ENCODE measurements at regions of chr11 and their contacts with region 1.

Region 1: GRCh38 chr11:112280268-112281126 is 19.8 kb upstream of the PLET1 start:
- DNase-seq: peak; percentile 22 to 88 (median 58)
- ATAC-seq: peak; percentile 87 to 95 (median 90)
- H3K4me3 ChIP-seq: peak overlapping the region; percentile 67 to 75
- H3K4me3 Mint-ChIP-seq: peak overlapping the region; percentile 86 to 89 (median 88)
- H3K27ac ChIP-seq: peak overlapping the region; percentile 26
- H3K27ac Mint-ChIP-seq: peak overlapping the region; percentile 73 to 83
- H3K4me1 ChIP-seq: peaks cover 3 to 17% of the 10 kb centered on the region in 2 experiments
- H3K4me1 Mint-ChIP-seq: peaks cover 15 to 21% (median 16%) of the 10 kb centered on the region in 3 donors
- H3K27me3 ChIP-seq: peaks cover 0 to 3% of the 10 kb centered on the region in 2 experiments
- H3K27me3 Mint-ChIP-seq: no peaks in the 10 kb centered on the region

Region 2: DNA sequence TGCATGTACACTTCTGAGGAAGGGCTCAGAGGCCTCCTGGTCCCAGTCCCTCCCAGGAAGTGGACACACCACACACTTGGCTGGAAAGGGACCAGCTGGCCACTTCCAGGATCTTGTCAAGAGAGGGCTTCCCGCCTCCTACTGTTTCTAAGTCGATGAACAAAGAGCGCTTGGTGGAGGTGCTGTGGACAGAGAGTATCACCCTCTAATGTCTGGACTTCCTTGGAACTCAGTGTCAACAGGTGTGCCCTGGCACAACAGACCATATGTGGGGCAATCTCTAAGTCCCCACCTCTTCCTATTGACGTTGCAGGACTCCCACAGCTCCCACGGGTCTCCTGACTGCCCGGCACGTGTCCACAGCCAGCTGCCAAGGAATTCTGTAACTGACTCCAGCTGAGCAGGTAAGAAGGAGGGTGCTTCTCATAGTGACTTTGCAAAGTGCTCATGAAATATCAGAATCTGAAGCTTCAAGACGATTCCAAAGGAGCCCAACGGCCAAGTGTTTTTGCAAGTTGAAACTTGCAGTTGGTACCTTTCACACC is 917.5 kb before region 1 on chr11:
- CTCF ChIA-PET with region 1: interaction called in 1 of 2 experiments, 10 read pairs
- POLR2A ChIA-PET with region 1: no interaction called
- DNase-seq: no peak
- ATAC-seq: no peak
- H3K4me3 ChIP-seq: no peak overlapping the region
- H3K4me3 Mint-ChIP-seq: no peak overlapping the region
- H3K27ac ChIP-seq: no peak overlapping the region
- H3K27ac Mint-ChIP-seq: no peak overlapping the region
- H3K4me1 ChIP-seq: no peaks in the 10 kb centered on the region
- H3K4me1 Mint-ChIP-seq: peaks cover 0 to 4% (median 4%) of the 10 kb centered on the region in 3 donors
- H3K27me3 ChIP-seq: no peaks in the 10 kb centered on the region
- H3K27me3 Mint-ChIP-seq: no peaks in the 10 kb centered on the region

Region 3: DNA sequence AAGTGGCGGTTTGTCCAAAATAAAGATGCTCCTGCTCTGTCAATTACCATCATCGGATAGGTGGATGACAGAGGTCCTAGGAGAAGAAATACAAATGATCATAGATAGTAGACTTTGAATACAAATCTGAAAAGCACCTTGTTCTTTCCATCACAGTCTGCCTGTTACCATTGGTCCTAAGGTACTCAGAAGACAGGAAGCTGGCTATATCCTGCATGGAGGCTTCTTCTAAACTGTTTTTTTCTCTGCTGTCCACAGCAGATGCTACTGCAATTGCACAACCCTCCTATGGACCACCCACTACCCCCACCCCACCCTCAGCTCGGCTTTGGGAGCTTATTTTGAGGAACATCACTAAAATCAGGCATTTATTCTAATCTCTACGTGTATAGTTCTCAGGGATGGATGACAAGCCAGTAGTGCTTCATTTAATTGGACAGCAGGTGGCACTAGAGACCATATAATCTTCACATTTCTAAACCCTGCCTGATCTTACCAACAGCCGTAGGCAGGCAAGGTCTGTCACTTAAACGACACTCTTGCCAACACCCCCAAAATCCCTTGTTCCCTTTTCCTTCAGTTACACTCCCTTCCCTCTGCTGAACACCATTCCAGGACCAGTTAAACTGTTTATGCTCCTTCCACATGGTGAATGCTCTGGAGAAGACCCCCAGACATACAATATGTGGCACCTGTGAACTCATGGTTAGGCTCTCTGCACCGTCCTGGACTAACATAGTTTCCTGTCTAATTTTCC is 60.8 kb before region 1 on chr11:
- CTCF ChIA-PET with region 1: interaction called, 94 to 121 read pairs
- POLR2A ChIA-PET with region 1: interaction called in 1 of 2 experiments, 3 read pairs
- DNase-seq: peak in 31 of 35 experiments; percentile 1 to 91 (median 22)
- ATAC-seq: peak; percentile 96 to 99 (median 97)
- H3K4me3 ChIP-seq: no peak overlapping the region
- H3K4me3 Mint-ChIP-seq: no peak overlapping the region
- H3K27ac ChIP-seq: no peak overlapping the region
- H3K27ac Mint-ChIP-seq: no peak overlapping the region
- H3K4me1 ChIP-seq: peaks cover 0 to 5% of the 10 kb centered on the region in 2 experiments
- H3K4me1 Mint-ChIP-seq: peaks cover 0 to 4% (median 2%) of the 10 kb centered on the region in 3 donors
- H3K27me3 ChIP-seq: peaks cover 0 to 4% of the 10 kb centered on the region in 2 experiments
- H3K27me3 Mint-ChIP-seq: no peaks in the 10 kb centered on the region

Region 4: DNA sequence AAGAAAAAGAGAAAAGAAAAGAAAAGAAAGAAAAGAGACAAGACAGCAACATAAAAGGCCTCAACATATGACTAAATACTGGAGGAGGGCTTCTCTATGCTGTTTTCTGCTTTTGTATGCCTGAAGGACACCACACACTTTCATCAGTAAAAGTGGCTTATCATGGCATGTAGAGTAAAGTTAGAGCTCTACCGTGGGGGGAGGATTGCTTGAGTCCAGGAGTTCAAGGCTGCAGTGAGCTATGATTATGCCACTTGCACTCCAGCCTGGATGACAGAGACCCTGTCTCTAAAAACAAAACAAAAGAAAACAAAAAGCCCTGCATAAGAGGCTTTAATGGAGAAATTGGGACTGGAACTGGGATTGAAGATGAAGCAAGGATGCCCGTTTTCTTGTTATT is 48.5 kb before region 1 on chr11:
- CTCF ChIA-PET with region 1: interaction called, 3 to 15 read pairs
- POLR2A ChIA-PET with region 1: interaction called, 3 to 6 read pairs
- DNase-seq: no peak
- ATAC-seq: no peak
- H3K4me3 ChIP-seq: no peak overlapping the region
- H3K4me3 Mint-ChIP-seq: no peak overlapping the region
- H3K27ac ChIP-seq: no peak overlapping the region
- H3K27ac Mint-ChIP-seq: no peak overlapping the region
- H3K4me1 ChIP-seq: peaks cover 7 to 8% of the 10 kb centered on the region in 2 experiments
- H3K4me1 Mint-ChIP-seq: peaks cover 14 to 24% (median 21%) of the 10 kb centered on the region in 3 donors
- H3K27me3 ChIP-seq: no peaks in the 10 kb centered on the region
- H3K27me3 Mint-ChIP-seq: no peaks in the 10 kb centered on the region

Region 5: GRCh38 chr11:113262594-113262993 is 982.1 kb after region 1 on chr11:
- CTCF ChIA-PET with region 1: interaction called, 3 to 12 read pairs
- POLR2A ChIA-PET with region 1: no interaction called
- DNase-seq: peak in 4 of 35 experiments; percentile 4 to 21 (median 8)
- ATAC-seq: peak in 1 of 4 experiments; percentile 28
- H3K4me3 ChIP-seq: no peak overlapping the region
- H3K4me3 Mint-ChIP-seq: no peak overlapping the region
- H3K27ac ChIP-seq: no peak overlapping the region
- H3K27ac Mint-ChIP-seq: no peak overlapping the region
- H3K4me1 ChIP-seq: no peaks in the 10 kb centered on the region
- H3K4me1 Mint-ChIP-seq: peaks cover 0 to 2% (median 0%) of the 10 kb centered on the region in 3 donors
- H3K27me3 ChIP-seq: peaks cover 0 to 5% of the 10 kb centered on the region in 2 experiments
- H3K27me3 Mint-ChIP-seq: peaks cover 6 to 11% of the 10 kb centered on the region in 2 donors

Region 6: GRCh38 chr11:113562981-113563461 is 1282.5 kb after region 1 on chr11:
- CTCF ChIA-PET with region 1: interaction called in 1 of 2 experiments, 10 read pairs
- POLR2A ChIA-PET with region 1: no interaction called
- DNase-seq: no peak
- ATAC-seq: no peak
- H3K4me3 ChIP-seq: no peak overlapping the region
- H3K4me3 Mint-ChIP-seq: no peak overlapping the region
- H3K27ac ChIP-seq: no peak overlapping the region
- H3K27ac Mint-ChIP-seq: no peak overlapping the region
- H3K4me1 ChIP-seq: no peaks in the 10 kb centered on the region
- H3K4me1 Mint-ChIP-seq: no peaks in the 10 kb centered on the region
- H3K27me3 ChIP-seq: peaks cover 0 to 10% of the 10 kb centered on the region in 2 experiments
- H3K27me3 Mint-ChIP-seq: peaks cover 12 to 29% of the 10 kb centered on the region in 2 donors